ENCODE measurements at regions of chr16 and their contacts with region 1.

Region 1: DNA sequence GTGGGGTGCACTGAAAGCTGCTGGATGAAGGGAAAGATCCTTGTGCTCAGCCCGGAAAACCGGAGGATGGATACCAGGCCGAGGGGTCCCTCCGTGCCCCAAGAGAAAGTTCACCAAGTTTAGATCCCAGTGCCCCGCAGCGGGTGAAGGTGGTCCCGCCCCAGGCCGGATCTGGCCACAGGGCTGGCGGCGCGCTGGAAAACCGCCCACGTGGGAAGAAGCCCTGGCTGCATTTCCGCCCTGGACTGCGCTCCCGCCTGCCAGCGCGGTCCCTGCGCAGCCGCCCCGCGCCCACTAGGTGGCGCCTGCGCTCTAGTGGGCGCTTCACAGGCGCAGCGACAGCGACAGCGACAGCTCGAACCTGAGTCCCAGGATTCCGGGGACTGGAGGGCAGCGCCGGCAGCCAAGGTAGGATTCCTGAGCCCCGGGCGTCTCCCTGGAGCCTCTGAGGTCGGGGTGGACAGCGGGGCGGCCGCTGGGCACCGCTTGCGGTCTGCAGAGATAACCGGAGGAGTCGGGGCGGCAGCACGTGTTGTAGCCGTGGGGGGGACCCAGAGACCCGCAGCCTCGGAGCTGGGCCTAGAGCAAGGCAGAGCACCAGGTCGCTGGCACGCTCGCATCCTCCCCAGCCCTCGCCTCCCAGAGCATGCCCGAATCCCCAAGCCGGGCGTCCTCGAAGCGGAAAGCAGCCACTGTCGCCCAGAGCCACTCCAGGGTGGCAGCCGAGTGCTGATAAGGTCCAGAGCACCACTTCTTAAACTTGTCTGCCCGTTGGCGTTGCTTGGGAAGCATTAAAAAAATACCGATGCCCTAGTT is at the start of gene CHD9:
- DNase-seq: peak; percentile 59 to 96 (median 75)

Region 2: DNA sequence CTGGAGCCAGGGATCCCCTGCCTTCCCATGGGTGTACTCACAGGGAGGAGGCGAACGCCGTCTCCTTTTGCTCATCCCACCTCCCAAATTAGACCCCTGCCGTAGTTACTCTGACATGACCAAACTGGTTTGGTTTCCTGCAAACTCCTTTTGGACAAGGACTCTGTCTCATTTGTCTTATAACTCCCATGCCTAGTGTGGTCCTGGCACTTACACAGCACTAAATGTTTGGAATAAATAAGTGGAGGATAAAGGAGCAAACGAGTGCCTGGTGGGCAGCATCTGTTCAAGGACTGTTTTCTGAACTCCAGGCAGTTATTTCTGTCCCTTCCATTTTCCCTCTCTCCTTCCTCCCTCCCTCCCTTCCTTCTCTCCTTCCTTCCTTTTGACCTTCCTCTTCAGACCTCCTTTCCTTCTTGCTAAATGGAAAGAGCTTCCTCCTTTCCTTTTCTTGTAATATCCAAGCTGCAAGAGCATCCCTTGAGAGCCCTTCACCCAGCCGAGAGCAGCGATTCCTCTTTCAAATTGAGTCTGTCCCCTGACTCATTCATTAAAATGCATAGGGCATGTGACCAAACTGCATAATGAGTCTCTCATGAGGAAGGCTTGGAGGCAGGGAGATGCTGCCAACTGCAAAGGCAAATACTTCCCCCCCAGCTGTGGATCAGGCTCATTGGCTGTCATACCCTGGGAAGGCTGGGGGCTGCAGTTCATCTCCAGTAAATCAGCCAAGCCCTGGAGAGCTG is 36.8 kb after region 1 on chr16:
- intact Hi-C with region 1: loop called (anchors 5 kb)
- DNase-seq: peak; percentile 68 to 96 (median 74)

Region 3: GRCh38 chr16:53103811-53104210 is 48.9 kb after region 1 on chr16:
- intact Hi-C with region 1: no loop called
- DNase-seq: no peak

Region 4: GRCh38 chr16:53130159-53131049 is 75.5 kb after region 1 on chr16:
- intact Hi-C with region 1: loop called (anchors 1 kb)
- DNase-seq: peak; percentile 87 to 99 (median 95)

Region 5: GRCh38 chr16:53159781-53160436 is 105.0 kb after region 1 on chr16:
- intact Hi-C with region 1: loop called (anchors 1 kb)
- DNase-seq: no peak

Region 6: DNA sequence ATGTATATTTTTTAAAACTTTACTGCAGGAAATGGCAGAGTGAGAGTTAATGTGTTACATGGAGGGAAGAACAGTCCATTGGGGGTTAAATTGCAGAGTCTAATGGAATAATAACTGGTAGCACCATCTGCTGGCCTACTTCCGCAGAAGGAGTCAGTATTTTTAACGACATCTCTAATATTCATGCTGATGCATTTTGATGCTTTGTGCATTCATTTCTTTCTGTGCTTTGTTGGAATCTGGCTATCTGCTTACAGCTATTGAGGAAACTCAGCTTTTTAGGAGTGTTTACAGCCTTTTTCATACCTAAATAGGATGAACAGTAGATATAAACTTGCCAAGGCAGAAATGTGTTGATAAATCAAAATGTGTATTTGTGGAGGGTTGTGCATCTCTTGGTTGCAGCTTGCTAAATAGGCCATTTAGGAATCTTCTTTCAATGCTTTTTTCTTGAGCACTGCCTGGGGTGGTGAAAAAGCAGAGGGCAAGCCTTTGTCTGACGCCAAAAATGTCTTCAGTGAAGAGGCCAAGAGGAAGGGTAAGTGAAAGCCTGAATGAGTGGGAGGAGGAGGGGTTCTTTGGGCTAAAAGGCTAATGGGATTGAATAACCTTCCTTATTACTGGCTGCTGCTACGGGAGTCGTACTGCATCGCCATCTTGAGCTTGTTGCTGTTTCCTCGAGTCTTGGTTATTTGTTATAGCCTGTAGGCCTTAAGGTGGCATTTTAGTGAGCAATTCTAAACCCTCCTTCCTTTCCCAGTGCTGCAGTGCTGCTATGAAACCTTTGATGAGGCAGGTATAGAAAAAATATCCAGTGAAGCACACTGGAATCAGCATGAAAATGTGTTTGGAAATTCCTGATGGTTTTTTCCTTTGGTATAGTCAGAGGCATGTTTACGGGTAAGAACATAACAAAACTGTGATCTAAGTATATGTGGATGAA is 153.2 kb after region 1 on chr16:
- intact Hi-C with region 1: loop called (anchors 1 kb)
- DNase-seq: peak in 9 of 10 donors; percentile 10 to 81 (median 40)

Region 7: GRCh38 chr16:53282975-53283946 is 228.4 kb after region 1 on chr16:
- intact Hi-C with region 1: loop called (anchors 5 kb)
- DNase-seq: no peak

Region 8: DNA sequence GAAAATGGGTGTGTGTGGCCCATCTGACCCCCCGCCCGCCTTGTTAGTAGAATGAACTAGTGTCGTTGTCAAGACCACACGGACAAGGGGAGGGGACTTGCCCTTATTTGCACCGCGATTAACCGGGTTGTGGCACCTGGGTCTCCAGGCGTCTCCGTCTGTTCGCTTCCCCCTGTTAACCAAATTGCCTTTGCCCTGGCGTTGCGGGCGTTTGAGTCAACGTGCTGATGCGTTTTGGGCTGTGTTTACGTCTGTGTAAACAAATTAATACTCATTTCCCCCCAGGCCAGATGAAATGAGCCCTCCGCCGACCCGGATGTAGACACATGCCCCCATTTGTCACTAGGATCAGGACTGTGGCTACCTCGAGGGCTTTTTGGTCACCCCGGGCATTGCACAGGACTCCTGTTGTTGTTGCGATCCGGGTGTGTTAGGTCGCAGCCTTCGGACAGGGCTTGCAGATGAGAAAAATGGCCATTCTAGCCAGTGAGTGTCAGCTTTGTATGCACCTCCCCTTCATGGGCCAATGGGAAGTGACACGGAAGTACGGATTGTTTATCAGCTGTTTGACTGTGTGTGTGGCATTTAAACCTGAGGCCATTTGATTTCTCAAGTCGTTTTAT is 380.3 kb after region 1 on chr16:
- intact Hi-C with region 1: loop called (anchors 10 kb)
- DNase-seq: peak; percentile 22 to 91 (median 68)

Region 9: GRCh38 chr16:53664724-53665345 is 610.0 kb after region 1 on chr16:
- intact Hi-C with region 1: no loop called
- DNase-seq: no peak